BJ (cell line): ENCODE measurements at regions of chr17 and their contacts with region 1.

Region 1: DNA sequence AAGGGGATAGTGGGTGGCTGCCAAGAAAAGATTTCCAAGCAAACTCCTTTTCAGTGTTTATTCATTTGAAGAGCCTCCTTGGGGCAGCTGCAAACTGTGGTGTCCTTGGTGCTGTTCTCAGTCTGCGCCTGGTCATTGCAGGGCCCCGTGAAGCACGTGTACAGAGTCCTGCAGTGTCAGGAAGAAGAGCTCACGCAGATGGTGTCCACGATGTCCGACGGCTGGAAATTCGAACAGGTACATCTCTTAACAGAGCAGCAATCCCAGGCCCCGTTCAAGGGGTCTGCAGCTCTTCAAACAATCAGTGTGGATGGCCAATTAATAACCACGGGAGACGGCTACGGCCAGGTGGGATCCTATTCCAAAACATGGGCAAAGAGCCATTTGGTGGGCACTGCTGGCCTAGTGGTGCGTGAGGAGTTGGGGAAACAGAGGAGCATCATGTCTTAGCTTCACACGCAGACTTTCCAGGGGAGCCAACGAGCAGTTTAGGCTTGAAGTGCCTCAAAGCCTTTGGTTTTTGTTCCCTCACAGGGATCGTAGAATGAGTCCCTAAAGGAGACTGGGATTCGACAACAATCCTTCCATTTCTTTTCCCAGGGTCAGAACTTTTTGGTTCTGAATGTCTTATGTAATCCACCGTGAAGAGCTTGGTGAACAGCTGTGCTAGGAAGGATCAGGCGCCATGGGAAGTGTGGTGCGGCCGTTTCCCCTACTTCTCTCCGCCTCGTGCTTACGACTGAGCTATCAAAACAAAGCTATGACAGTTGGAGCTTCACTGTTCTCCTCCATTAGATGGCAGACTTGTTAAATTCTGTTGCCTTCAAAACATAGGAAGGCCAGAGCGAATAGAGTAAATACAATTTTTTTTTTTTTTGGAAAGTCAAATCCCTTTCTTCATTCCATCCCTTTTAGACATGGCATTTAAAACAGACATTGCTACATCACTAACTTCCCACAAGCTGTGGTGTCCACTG is 12.6 kb downstream of the KCTD2 start:
- DNase-seq: peak; percentile 65
- H3K4me3 ChIP-seq: no peak overlapping the region
- H3K27me3 ChIP-seq: no peaks in the 10 kb centered on the region
- CTCF ChIP-seq: peak; percentile 60

Region 2: DNA sequence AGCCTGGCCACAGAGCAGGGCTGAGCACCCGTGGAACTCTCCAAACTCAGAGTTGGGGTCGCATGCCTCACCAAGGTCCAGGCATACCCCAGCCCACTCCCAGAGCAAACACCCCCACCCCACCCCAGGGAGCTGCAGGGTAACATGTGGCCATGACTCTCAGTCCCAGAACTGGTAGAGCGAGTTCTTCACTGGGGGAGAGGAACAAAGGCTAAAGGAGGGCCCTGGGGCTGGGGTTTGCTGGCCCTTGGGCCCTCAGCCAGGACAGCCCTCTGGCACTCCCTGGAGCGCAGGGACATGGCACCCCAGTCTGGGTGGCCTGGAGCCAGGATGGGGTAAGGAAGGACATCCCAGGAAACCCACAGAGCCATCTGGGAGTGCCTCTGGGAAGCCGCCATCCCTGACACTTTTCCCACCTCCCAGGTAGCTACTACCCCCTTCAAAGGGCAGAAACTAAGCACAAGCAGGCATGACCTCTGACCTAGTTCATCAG is 91.2 kb before region 1 on chr17:
- CTCF ChIA-PET with region 1: no interaction called
- POLR2A ChIA-PET with region 1: no interaction called
- DNase-seq: no peak
- H3K4me3 ChIP-seq: no peak overlapping the region
- H3K27me3 ChIP-seq: peaks cover 9% of the 10 kb centered on the region
- CTCF ChIP-seq: no peak

Region 3: DNA sequence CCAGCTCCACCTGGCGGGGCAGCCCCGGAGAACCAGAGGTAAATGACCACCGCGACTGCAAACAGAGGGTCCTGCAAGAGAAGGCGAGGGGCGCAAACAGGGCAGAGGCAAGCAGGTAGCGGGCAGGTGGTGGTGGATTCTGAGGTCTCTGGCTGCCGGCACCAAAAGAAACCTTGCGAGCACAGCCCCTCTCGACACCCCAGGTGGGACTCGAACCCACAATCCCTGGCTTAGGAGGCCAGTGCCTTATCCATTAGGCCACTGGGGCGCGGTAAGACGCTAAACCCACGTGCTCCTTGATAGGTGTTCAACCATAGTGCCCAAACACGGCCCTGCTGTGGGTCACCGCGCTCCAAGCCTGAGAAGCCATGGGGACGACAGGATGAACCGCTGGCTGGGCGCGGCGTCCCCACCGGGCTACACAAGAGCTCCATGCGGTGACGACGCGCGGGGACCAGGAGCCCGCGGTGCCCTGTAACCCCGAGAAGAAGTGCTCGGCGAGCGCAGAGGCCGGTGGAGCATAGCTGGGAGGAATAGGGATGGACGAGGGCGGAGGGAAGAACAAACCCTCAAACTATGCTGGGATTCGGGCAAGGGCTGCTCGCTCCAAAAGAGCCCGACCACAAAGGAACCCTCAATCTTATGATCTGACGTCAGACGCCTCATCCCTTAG is 25.3 kb before region 1 on chr17:
- CTCF ChIA-PET with region 1: no interaction called
- POLR2A ChIA-PET with region 1: no interaction called
- DNase-seq: no peak
- H3K4me3 ChIP-seq: peak overlapping the region; percentile 56
- H3K27me3 ChIP-seq: no peaks in the 10 kb centered on the region
- CTCF ChIP-seq: peak; percentile 28; the same call in 1 of the 2 replicates

Region 4: GRCh38 chr17:75069783-75070182 is 10.1 kb after region 1 on chr17:
- CTCF ChIA-PET with region 1: interaction called, 14 read pairs
- POLR2A ChIA-PET with region 1: no interaction called
- DNase-seq: no peak
- H3K4me3 ChIP-seq: no peak overlapping the region
- H3K27me3 ChIP-seq: no peaks in the 10 kb centered on the region
- CTCF ChIP-seq: peak; percentile 56

Region 5: DNA sequence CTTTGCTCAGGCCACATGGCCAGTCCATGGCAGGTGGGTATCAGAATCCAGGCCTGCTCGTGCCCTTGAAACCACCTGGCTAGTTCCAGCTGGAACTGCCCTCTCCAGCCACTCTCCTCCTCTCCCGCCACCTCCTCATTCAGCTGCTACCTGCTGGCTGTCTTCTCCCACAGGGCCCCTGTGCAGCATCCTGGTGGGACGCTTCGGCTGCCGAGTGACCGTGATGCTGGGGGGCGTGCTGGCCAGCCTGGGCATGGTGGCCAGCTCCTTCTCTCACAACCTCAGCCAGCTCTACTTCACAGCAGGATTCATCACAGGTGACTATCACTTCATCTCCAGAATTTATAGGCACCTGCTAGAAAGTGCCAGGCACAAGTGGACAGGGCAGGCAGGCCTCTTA is 38.2 kb after region 1 on chr17:
- CTCF ChIA-PET with region 1: no interaction called
- POLR2A ChIA-PET with region 1: no interaction called
- DNase-seq: no peak
- H3K4me3 ChIP-seq: no peak overlapping the region
- H3K27me3 ChIP-seq: no peaks in the 10 kb centered on the region
- CTCF ChIP-seq: no peak

Region 6: DNA sequence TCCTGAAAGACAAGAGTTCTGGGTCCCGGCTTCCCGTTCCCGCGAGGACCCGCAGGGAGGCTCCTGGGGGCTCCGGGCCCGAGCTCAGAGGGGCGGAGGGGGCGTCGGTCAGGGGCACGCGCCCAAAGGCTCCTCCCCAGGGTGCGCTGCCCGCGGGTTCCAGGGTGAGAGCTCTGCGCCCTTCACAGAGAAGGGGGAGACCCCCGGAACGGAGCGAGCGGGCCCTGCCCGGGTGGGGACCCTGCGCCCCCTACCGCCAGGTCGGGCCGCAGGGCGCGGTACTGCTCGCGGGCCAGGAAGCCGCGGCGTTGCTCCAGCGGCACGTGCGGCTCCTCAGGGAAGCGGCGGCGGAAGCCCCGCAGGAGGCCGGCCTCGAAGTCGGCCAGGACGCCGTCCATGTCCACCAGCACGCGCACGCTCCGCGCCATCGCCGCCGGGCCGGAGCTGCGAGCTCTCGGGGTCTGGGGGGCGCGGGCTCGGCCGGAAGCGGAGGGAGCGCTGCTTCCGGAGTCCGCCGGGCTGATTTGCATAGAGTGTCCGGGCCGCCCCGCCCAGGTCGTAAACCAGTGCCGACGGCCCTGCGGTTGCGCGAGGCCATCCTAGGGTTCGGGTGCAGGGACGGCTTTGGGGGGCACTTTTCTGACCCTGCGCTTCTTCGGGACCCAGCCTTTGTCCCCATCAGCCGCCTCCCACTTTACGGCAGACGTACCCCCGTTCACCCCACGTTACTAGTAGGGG is 71.8 kb after region 1 on chr17 and contains the start of gene NT5C:
- CTCF ChIA-PET with region 1: interaction called, 24 read pairs
- POLR2A ChIA-PET with region 1: no interaction called
- DNase-seq: no peak
- H3K4me3 ChIP-seq: peak within 1 kb of the TSS; percentile 66
- H3K27me3 ChIP-seq: no peaks in the 10 kb centered on the region
- CTCF ChIP-seq: peak; percentile 53
- polyA plus RNA-seq, gene NT5C: 38.3 and 61.8 TPM in 2 replicates

Region 7: DNA sequence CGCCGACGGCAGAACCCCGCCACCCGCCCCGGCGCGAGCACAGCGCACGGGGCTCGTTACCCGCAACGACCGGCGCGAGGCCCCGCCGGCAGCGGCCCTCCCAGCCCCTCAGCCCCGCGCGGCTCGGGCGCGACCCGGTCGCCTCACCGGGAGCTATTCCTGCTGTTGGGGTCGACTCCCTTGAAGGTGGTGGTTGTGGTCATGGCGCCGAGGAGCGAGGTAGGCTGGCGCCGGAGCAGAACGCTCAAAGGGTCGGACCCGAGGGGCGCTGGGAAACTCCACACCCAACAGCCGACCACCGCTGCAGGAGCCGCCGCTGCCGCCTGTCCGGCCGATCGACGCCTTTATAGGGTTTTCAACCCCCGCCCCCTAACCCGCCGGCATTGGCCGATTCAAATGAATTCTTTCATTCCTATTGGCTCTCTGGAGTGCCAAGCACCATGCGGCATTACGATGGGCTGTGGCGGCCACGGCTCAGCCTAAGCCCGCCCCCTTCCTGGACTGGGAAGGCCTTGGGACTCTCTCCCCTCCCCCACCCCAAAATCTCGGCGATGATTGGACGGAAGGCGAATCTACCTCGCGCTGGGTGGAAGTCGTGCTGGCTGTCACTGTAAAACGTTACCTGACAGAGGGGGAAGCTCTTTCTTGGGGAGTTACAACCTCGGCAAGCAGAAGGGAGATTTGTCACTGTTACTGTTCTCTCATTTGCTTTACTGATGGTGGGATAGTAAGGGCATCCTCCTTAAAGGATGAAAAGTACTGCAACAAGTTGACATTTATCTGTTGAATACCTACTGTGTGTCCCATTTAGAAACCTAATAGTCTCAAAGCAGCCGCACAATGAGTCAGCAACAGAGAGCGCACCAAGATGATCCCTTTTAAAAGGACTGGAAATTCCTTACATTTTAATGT is 94.8 kb after region 1 on chr17 and contains the start of gene JPT1:
- CTCF ChIA-PET with region 1: interaction called, 10 read pairs
- POLR2A ChIA-PET with region 1: interaction called, 5 read pairs
- DNase-seq: peak; percentile 92
- H3K4me3 ChIP-seq: peak within 1 kb of the TSS; percentile 68
- H3K27me3 ChIP-seq: no peaks in the 10 kb centered on the region
- CTCF ChIP-seq: no peak
- polyA plus RNA-seq, gene JPT1: 65.5 and 111 TPM in 2 replicates

Region 8: GRCh38 chr17:75173526-75173925 is 113.9 kb after region 1 on chr17:
- CTCF ChIA-PET with region 1: interaction called, 14 read pairs
- POLR2A ChIA-PET with region 1: no interaction called
- DNase-seq: no peak
- H3K4me3 ChIP-seq: no peak overlapping the region
- H3K27me3 ChIP-seq: no peaks in the 10 kb centered on the region
- CTCF ChIP-seq: no peak

Region 9: GRCh38 chr17:75199886-75200618 is 140.4 kb after region 1 on chr17:
- CTCF ChIA-PET with region 1: interaction called, 18 read pairs
- POLR2A ChIA-PET with region 1: interaction called, 5 read pairs
- DNase-seq: no peak
- H3K4me3 ChIP-seq: no peak overlapping the region
- H3K27me3 ChIP-seq: no peaks in the 10 kb centered on the region
- CTCF ChIP-seq: no peak

Region 10: DNA sequence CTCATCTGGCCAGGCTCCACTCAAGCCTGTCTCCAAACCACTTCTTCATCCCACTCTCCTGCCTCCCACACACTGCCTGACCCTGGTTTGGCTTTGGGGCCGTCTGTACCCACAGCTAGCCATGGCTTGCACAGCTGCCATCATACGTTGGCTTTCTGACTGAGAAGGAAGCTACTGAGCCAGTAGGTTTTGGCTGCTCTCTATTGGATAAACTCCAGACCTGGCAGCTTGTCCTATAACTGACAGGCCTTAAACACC is 207.4 kb after region 1 on chr17:
- CTCF ChIA-PET with region 1: no interaction called
- POLR2A ChIA-PET with region 1: no interaction called
- DNase-seq: no peak
- H3K4me3 ChIP-seq: no peak overlapping the region
- H3K27me3 ChIP-seq: no peaks in the 10 kb centered on the region
- CTCF ChIP-seq: no peak